Heart right ventricle (tissue), 16 donors: ENCODE measurements at regions of chr3 and their contacts with region 1.

Region 1: DNA sequence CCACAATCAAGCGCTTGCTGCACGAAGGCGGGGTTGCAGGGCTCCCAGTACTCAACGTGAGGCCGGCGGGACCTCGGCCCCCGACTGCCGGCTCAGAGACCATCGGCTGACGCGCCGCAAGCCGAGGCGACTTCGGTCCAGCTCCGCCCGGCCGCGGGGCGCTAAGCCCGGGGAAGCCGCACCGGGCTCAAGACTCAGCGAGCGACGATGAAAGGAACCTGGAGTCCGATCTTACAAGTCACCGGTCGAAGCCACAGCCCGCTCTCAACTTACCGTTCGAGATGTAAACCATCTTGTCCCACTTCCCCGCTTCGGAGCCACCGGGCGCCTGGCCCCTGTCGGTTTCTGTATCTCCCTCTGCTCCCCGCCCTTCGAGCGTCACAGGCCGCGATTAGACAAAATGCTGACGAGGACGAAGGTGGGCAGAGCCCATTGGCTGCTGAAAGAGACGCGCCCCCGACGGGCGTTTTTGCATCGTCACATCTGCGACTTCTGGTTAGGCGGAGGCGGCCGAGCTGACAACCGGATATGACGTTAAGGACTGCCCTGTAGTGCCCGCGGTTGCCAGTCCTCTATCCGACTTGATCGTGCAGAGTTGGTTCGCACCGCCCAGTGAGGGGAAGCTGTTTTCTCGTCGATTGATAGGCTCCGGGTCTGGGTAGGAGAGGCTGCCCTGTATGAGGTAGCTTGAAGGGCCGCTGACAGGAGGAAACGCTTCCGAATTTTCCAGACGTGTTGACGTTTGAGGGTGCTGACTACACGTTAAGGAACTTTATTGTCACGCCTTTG is at the start of gene SELENOK:
- DNase-seq: peak; percentile 97 to 99
- ATAC-seq: peak; percentile 98 to 99 (median 99)
- H3K4me3 ChIP-seq: peak within 1 kb of the TSS; percentile 76 to 97 (median 82)
- H3K27ac ChIP-seq: peak within 1 kb of the TSS; percentile 62 to 97 (median 92)
- H3K4me1 ChIP-seq: peaks cover 0 to 40% (median 33%) of the 10 kb centered on the region in 9 donors
- H3K27me3 ChIP-seq: peaks cover 0 to 30% (median 0%) of the 10 kb centered on the region in 7 donors
- CTCF ChIP-seq: peak in 1 of 9 donors; percentile 18
- total RNA-seq, gene SELENOK: 90.9 to 146 (median 101) TPM

Region 2: GRCh38 chr3:53293867-53294266 is 597.8 kb before region 1 on chr3:
- intact Hi-C with region 1: loop called in 1 of 10 experiments (anchors 10 kb)
- DNase-seq: no peak
- ATAC-seq: peak in 7 of 8 donors; percentile 7 to 65 (median 50)
- H3K4me3 ChIP-seq: no peak overlapping the region
- H3K27ac ChIP-seq: no peak overlapping the region
- H3K4me1 ChIP-seq: peaks cover 0 to 27% (median 0%) of the 10 kb centered on the region in 9 donors
- H3K27me3 ChIP-seq: no peaks in the 10 kb centered on the region
- CTCF ChIP-seq: no peak

Region 3: GRCh38 chr3:53773611-53774368 is 117.9 kb before region 1 on chr3:
- intact Hi-C with region 1: no loop called
- DNase-seq: no peak
- ATAC-seq: peak in 1 of 8 donors; percentile 34
- H3K4me3 ChIP-seq: no peak overlapping the region
- H3K27ac ChIP-seq: no peak overlapping the region
- H3K4me1 ChIP-seq: peaks cover 0 to 15% (median 0%) of the 10 kb centered on the region in 9 donors
- H3K27me3 ChIP-seq: peaks cover 0 to 15% (median 12%) of the 10 kb centered on the region in 7 donors
- CTCF ChIP-seq: no peak

Region 4: GRCh38 chr3:53845103-53845880 is 46.4 kb before region 1 on chr3:
- intact Hi-C with region 1: no loop called
- DNase-seq: peak; percentile 43 to 44
- ATAC-seq: peak; percentile 40 to 65 (median 58)
- H3K4me3 ChIP-seq: peak overlapping the region; percentile 22 to 73 (median 62)
- H3K27ac ChIP-seq: peak overlapping the region in 8 of 10 donors; percentile 12 to 80 (median 34)
- H3K4me1 ChIP-seq: peaks cover 0 to 18% (median 9%) of the 10 kb centered on the region in 9 donors
- H3K27me3 ChIP-seq: peaks cover 0 to 50% (median 31%) of the 10 kb centered on the region in 7 donors
- CTCF ChIP-seq: peak in 5 of 9 donors; percentile 14 to 44 (median 37)

Region 5: GRCh38 chr3:53949541-53949940 is 57.9 kb after region 1 on chr3:
- intact Hi-C with region 1: no loop called
- DNase-seq: no peak
- ATAC-seq: no peak
- H3K4me3 ChIP-seq: no peak overlapping the region
- H3K27ac ChIP-seq: no peak overlapping the region
- H3K4me1 ChIP-seq: no peaks in the 10 kb centered on the region
- H3K27me3 ChIP-seq: peaks cover 0 to 2% (median 0%) of the 10 kb centered on the region in 7 donors
- CTCF ChIP-seq: no peak

Region 6: GRCh38 chr3:53970661-53971060 is 79.0 kb after region 1 on chr3:
- intact Hi-C with region 1: no loop called
- DNase-seq: no peak
- ATAC-seq: no peak
- H3K4me3 ChIP-seq: no peak overlapping the region
- H3K27ac ChIP-seq: no peak overlapping the region
- H3K4me1 ChIP-seq: no peaks in the 10 kb centered on the region
- H3K27me3 ChIP-seq: no peaks in the 10 kb centered on the region
- CTCF ChIP-seq: no peak